Natural killer cell (primary cell): ENCODE measurements at regions of chrX and their contacts with region 1.

Region 1: DNA sequence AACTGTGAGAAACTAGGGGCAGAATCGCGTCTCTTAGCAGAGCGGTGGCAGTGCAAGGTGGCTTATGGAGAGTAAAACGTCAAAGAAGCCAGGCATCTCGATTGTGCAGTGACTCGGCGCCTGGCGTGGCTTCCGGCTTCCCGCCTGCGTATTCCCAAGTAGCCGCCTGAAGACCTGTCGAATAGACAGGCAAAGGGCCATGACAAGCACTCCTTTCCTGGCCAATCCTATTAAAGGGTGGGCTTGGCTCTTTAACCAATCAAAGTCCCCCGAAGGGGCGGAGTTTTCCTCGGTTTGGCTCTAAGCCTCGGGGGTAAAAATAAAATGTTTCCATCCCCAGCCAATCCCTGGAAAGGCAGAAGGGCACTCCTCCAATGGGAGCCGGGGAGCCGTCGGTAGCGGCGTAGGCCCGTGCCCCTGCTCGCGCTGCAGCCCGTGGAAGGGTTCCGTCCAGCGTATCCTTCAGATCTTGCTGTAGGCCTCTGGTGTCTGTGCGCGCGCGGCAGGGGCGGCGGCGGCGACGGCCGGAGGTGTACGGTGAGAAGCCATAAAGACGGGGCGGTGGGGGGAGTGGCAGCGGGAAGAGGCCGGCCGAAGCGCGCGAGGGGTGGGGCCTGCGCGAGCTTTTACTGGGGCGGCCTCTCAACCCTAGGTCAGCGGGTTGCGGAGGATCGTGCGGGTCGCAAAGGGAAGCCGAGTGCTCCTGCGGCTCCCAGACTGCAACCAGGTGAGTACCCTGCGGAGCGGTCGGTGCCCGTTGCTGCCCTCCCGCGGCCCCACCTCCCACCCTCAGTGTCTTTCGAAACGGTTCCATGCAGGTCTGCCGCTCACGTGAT is at the start of gene KANTR:
- DNase-seq: peak; percentile 68 to 90
- ATAC-seq: peak; percentile 78 to 90 (median 82)
- H3K4me3 ChIP-seq: peak within 1 kb of the TSS; percentile 59
- H3K4me3 Mint-ChIP-seq: peak within 1 kb of the TSS; percentile 87
- H3K27ac ChIP-seq: peak within 1 kb of the TSS; percentile 59
- H3K27ac Mint-ChIP-seq: peak within 1 kb of the TSS; percentile 73 to 80
- H3K4me1 ChIP-seq: peaks cover 12% of the 10 kb centered on the region
- H3K4me1 Mint-ChIP-seq: peaks cover 10 to 18% of the 10 kb centered on the region in 2 donors
- H3K27me3 ChIP-seq: no peaks in the 10 kb centered on the region
- H3K27me3 Mint-ChIP-seq: no peaks in the 10 kb centered on the region
- CTCF ChIP-seq: no peak
- total RNA-seq, gene KANTR: 15.1 to 18.1 (median 17.1) TPM

Region 2: GRCh38 chrX:53071604-53072417 is 22.2 kb before region 1 on chrX:
- intact Hi-C with region 1: loop called (anchors 1 kb)
- DNase-seq: peak in 1 of 2 donors; percentile 90
- ATAC-seq: peak; percentile 77 to 89 (median 88)
- H3K4me3 ChIP-seq: peak overlapping the region; percentile 49
- H3K4me3 Mint-ChIP-seq: peak overlapping the region; percentile 64
- H3K27ac ChIP-seq: peak overlapping the region; percentile 21
- H3K27ac Mint-ChIP-seq: peak overlapping the region in 1 of 2 donors; percentile 74
- H3K4me1 ChIP-seq: peaks cover 10% of the 10 kb centered on the region
- H3K4me1 Mint-ChIP-seq: peaks cover 12 to 21% of the 10 kb centered on the region in 2 donors
- H3K27me3 ChIP-seq: no peaks in the 10 kb centered on the region
- H3K27me3 Mint-ChIP-seq: peaks cover 0 to 5% of the 10 kb centered on the region in 2 donors
- CTCF ChIP-seq: peak; percentile 59